SK-N-SH (cell line): ENCODE measurements at regions of chr13 and their contacts with region 1.

Region 1: GRCh38 chr13:49690992-49691886 is at the start of gene EBPL:
- DNase-seq: peak; percentile 98
- H3K4me3 ChIP-seq: peak within 1 kb of the TSS; percentile 67 to 72
- H3K27ac ChIP-seq: peak within 1 kb of the TSS; percentile 70 to 92
- H3K4me1 ChIP-seq: peaks cover 0 to 4% of the 10 kb centered on the region in 2 experiments; a peak in 1 of 4 replicates
- H3K27me3 ChIP-seq: no peaks in the 10 kb centered on the region
- CTCF ChIP-seq: 0 out of 2 replicates have a peak, but pooled peaks have one; percentile 10
- EP300 ChIP-seq: no peak
- RAD21 ChIP-seq: no peak
- polyA plus RNA-seq, gene EBPL: 113 and 114 TPM in 2 replicates

Region 2: DNA sequence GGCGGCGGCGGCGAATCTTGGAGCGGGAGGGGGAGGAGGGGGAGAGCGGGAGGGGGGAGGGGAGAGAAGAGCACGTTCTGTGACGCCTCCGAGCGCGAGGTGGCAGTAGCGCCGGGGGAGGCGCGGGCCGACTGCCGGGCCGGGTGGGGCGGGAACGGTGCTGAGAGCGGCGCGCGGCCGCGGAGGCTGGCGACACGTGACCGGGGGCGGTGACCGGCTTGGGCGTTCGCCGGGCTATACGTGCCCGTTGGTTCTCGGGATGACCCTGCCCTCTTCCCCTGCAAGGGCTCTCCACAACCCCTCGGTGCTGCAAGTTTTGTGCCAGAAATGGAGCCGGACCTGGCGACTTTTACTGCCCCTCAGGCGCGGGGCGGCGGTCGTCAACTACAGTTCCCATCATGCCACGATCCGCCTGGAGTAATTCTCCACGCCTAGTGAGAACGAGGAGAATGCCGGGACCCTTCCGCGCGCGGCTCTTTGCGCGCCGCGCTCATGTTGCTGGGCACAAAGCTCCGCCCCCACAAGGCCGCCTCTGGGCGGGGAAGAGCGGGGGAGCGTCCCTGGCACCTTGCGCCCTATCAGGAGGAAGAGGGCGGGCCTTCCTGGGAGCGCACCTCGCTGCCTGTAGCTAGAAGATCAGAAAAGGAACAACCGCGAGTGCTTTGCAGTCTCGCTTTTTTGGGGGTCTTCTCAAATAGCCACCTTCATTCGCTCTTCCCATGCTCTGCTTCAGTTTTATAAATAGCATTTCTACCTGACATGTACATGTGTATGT is 101.5 kb after region 1 on chr13 and contains the start of gene KPNA3:
- CTCF ChIA-PET with region 1: no interaction called
- POLR2A ChIA-PET with region 1: interaction called, 12 read pairs
- DNase-seq: peak; percentile 97
- H3K4me3 ChIP-seq: peak within 1 kb of the TSS; percentile 77 to 80
- H3K27ac ChIP-seq: peak within 1 kb of the TSS; percentile 89 to 97
- H3K4me1 ChIP-seq: peaks cover 6 to 7% of the 10 kb centered on the region in 2 experiments; a peak in 3 of 4 replicates
- H3K27me3 ChIP-seq: no peaks in the 10 kb centered on the region
- CTCF ChIP-seq: no peak
- EP300 ChIP-seq: no peak
- RAD21 ChIP-seq: no peak; the same call in 1 of the 2 replicates
- polyA plus RNA-seq, gene KPNA3: 11.3 and 13.1 TPM in 2 replicates

Region 3: DNA sequence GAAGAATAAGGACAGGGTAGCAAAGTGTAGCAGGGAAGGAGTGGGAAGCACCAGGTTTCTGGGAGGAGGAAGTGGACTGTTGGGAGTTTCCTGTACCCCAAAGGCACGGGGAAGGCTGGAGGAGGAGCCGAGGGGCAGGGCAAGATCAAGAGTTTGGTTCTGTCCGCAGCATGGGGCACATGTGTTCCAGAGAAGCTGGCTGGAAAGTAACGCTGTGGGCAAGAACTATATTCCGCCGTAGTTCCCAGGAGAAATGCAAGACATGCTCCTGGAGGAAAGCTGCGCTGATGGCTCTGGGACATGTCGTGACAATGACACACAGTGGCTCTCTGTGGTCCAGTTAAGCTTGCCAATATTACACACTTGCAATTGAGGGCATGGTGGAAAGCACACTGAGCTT is 152.9 kb after region 1 on chr13:
- CTCF ChIA-PET with region 1: interaction called, 10 read pairs
- POLR2A ChIA-PET with region 1: no interaction called
- DNase-seq: no peak
- H3K4me3 ChIP-seq: no peak overlapping the region
- H3K27ac ChIP-seq: no peak overlapping the region
- H3K4me1 ChIP-seq: no peaks in the 10 kb centered on the region; a peak in 1 of 4 replicates
- H3K27me3 ChIP-seq: no peaks in the 10 kb centered on the region
- CTCF ChIP-seq: no peak
- EP300 ChIP-seq: no peak
- RAD21 ChIP-seq: no peak